ENCODE measurements at regions of chr1 and their contacts with region 1.

Region 1: GRCh38 chr1:167721617-167722151 is at the start of gene MPZL1:
- DNase-seq: peak; percentile 96
- H3K4me3 ChIP-seq: peak within 1 kb of the TSS; percentile 59 to 97 (median 72)
- H3K27ac ChIP-seq: peak within 1 kb of the TSS; percentile 72
- H3K4me1 ChIP-seq: peaks cover 26% of the 10 kb centered on the region
- H3K27me3 ChIP-seq: no peaks in the 10 kb centered on the region
- CTCF ChIP-seq: no peak
- POLR2A ChIP-seq: peak; percentile 61
- total RNA-seq, gene MPZL1: 99.1 and 99.4 TPM in 2 replicates

Region 2: GRCh38 chr1:167797015-167797414 is 75.3 kb after region 1 on chr1:
- CTCF ChIA-PET with region 1: interaction called, 11 read pairs
- POLR2A ChIA-PET with region 1: no interaction called
- dilution Hi-C with region 1: no loop called
- intact Hi-C with region 1: no loop called
- DNase-seq: peak; percentile 70
- H3K4me3 ChIP-seq: no peak overlapping the region
- H3K27ac ChIP-seq: no peak overlapping the region
- H3K4me1 ChIP-seq: peaks cover 12% of the 10 kb centered on the region
- H3K27me3 ChIP-seq: no peaks in the 10 kb centered on the region
- CTCF ChIP-seq: no peak
- POLR2A ChIP-seq: no peak

Region 3: DNA sequence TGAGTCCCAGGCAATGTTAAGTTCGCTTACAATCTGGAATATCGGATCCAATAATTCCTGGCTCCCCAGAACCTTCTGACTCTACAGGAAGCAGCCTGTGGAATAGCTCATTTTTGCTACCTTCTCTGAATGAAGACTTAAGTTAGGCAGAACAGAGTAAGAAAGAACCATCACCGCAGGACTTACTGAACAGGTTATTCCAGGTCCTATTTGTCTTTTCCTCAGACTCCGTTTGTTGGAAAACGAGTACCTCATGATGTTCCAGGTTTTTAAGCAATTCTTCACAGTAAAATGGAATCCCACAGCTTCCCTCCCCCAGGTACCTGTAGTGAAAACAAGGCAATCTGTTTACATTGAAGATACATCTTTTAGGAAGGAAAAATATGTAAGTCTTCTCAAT is 132.5 kb after region 1 on chr1:
- CTCF ChIA-PET with region 1: no interaction called
- POLR2A ChIA-PET with region 1: no interaction called
- dilution Hi-C with region 1: no loop called
- intact Hi-C with region 1: no loop called
- DNase-seq: no peak
- H3K4me3 ChIP-seq: no peak overlapping the region
- H3K27ac ChIP-seq: no peak overlapping the region
- H3K4me1 ChIP-seq: no peaks in the 10 kb centered on the region
- H3K27me3 ChIP-seq: peaks cover 0 to 3% of the 10 kb centered on the region in 2 experiments
- CTCF ChIP-seq: no peak
- POLR2A ChIP-seq: no peak

Region 4: GRCh38 chr1:168136709-168137514 is 415.2 kb after region 1 on chr1 and contains the start of gene GPR161:
- CTCF ChIA-PET with region 1: no interaction called
- POLR2A ChIA-PET with region 1: no interaction called
- dilution Hi-C with region 1: no loop called
- intact Hi-C with region 1: loop called (anchors 5 kb)
- DNase-seq: peak; percentile 63
- H3K4me3 ChIP-seq: peak within 1 kb of the TSS; percentile 73 to 92 (median 77)
- H3K27ac ChIP-seq: peak within 1 kb of the TSS; percentile 44
- H3K4me1 ChIP-seq: peaks cover 19% of the 10 kb centered on the region
- H3K27me3 ChIP-seq: no peaks in the 10 kb centered on the region
- CTCF ChIP-seq: no peak
- POLR2A ChIP-seq: peak; percentile 69
- total RNA-seq, gene GPR161: 34.8 and 36.5 TPM in 2 replicates